Thyroid gland (tissue), 4 donors: ENCODE measurements at regions of chr6 and their contacts with region 1.

Region 1: GRCh38 chr6:41066867-41067304 is 5.3 kb downstream of the OARD1 start:
- DNase-seq: peak; percentile 85 to 89
- H3K4me3 ChIP-seq: no peak overlapping the region
- H3K27ac ChIP-seq: peak overlapping the region in 2 of 3 donors; percentile 13 to 42
- H3K4me1 ChIP-seq: peaks cover 7 to 15% of the 10 kb centered on the region in 2 donors
- H3K27me3 ChIP-seq: no peaks in the 10 kb centered on the region
- CTCF ChIP-seq: peak; percentile 50 to 94 (median 80)
- POLR2A ChIP-seq: no peak

Region 2: DNA sequence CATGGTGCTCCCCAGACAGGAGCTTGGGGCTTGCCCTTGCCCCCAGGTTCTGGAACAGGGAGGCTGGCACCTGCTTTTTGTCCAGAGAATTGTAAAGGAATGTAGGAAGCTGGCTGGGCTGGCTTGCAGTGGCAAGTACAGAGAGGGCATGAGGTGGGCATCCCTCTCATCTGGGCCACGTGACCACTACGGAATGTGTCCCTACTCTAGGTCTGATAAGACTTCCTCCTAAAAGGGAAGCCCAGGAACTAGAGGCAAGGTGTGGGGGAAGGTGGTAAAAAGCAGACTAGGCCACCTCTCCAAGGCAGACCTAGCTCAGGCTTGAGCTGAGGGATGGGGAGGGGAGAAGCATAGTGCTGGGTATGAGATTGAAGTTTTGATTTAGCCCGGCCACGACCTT is 66.6 kb before region 1 on chr6:
- intact Hi-C with region 1: loop called (anchors 10 kb)
- DNase-seq: no peak
- H3K4me3 ChIP-seq: no peak overlapping the region
- H3K27ac ChIP-seq: peak overlapping the region in 2 of 3 donors; percentile 23 to 35
- H3K4me1 ChIP-seq: peaks cover 41 to 57% of the 10 kb centered on the region in 2 donors
- H3K27me3 ChIP-seq: no peaks in the 10 kb centered on the region
- CTCF ChIP-seq: no peak
- POLR2A ChIP-seq: no peak